Activated B cell treated with CpG ODN at 0.5 μM for 24 hours (primary cell): ENCODE measurements at regions of chr3 and their contacts with region 1.

Region 1: GRCh38 chr3:59049671-59050331 is at the start of gene CFAP20DC:
- DNase-seq: peak; percentile 85
- ATAC-seq: peak; percentile 96
- H3K4me3 Mint-ChIP-seq: peak within 1 kb of the TSS; percentile 81
- H3K27ac Mint-ChIP-seq: peak within 1 kb of the TSS; percentile 61
- H3K4me1 Mint-ChIP-seq: peaks cover 7% of the 10 kb centered on the region
- H3K27me3 Mint-ChIP-seq: no peaks in the 10 kb centered on the region
- CTCF ChIP-seq: no peak
- total RNA-seq, gene CFAP20DC: 1.0 and 1.6 TPM in 2 replicates

Region 2: DNA sequence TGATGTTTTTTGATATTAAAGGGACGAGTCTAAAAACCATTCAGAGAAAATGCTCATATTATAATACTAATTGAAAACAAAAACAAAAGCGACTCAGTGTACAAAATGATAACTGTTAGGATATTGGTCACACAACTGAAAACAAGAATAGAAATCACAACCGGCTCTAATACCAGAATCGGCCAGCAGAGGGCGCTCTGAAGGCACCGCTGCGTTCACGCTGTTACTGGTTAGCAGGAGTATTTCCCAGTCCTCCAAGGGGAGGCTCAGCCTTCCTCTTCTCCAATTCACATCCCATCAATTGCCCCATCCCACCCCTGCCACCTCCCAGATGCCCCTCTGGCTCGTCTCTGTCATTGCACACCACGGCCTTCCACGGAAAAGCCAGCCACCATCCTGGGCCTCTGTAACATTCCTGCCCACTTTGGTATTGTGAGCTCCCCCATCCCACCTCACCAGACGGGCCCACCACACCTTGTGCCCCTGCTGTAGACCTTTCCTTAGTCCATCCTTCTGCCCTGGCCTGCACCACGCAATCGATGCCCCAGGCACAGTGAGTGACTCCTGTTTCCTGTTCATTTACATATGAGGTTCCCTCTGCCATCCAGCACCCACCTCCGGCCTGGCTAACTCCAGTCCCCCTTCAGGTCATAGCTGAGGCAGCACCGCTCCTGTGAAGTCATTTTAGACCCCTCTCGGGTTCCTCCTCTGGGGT is 481.1 kb before region 1 on chr3:
- CTCF ChIA-PET with region 1: no interaction called
- POLR2A ChIA-PET with region 1: no interaction called
- intact Hi-C with region 1: loop called (anchors 1 kb)
- DNase-seq: peak; percentile 61
- ATAC-seq: peak; percentile 49
- H3K4me3 Mint-ChIP-seq: peak overlapping the region; percentile 65
- H3K27ac Mint-ChIP-seq: no peak overlapping the region
- H3K4me1 Mint-ChIP-seq: peaks cover 6% of the 10 kb centered on the region
- H3K27me3 Mint-ChIP-seq: no peaks in the 10 kb centered on the region
- CTCF ChIP-seq: no peak

Region 3: GRCh38 chr3:58640700-58641372 is 409.0 kb before region 1 on chr3:
- CTCF ChIA-PET with region 1: interaction called, 52 read pairs
- POLR2A ChIA-PET with region 1: no interaction called
- intact Hi-C with region 1: loop called (anchors 1 kb)
- DNase-seq: peak; percentile 50
- ATAC-seq: peak; percentile 96
- H3K4me3 Mint-ChIP-seq: no peak overlapping the region
- H3K27ac Mint-ChIP-seq: no peak overlapping the region
- H3K4me1 Mint-ChIP-seq: peaks cover 7% of the 10 kb centered on the region
- H3K27me3 Mint-ChIP-seq: peaks cover 2% of the 10 kb centered on the region
- CTCF ChIP-seq: peak; percentile 37

Region 4: DNA sequence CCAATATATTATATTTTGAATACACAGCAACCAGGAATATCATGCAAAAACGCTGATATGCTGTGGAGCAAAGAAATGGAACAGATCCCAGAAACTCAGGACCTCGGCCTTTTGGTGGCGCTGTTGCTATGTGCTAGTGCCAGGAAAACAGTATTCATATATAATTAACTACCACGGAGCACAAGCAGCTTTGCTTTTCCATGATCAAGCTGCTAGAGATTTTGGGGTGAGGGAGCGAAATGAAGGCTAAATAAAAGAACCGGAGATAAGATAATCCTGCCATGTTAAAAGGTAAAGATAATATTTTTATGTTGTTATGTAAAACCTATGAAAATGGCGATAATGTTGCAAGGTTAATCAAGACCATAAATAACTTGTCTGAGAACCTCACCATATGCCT is 225.5 kb before region 1 on chr3:
- CTCF ChIA-PET with region 1: interaction called, 56 read pairs
- POLR2A ChIA-PET with region 1: no interaction called
- intact Hi-C with region 1: loop called (anchors 1 kb)
- DNase-seq: no peak
- ATAC-seq: no peak
- H3K4me3 Mint-ChIP-seq: no peak overlapping the region
- H3K27ac Mint-ChIP-seq: no peak overlapping the region
- H3K4me1 Mint-ChIP-seq: peaks cover 5% of the 10 kb centered on the region
- H3K27me3 Mint-ChIP-seq: no peaks in the 10 kb centered on the region
- CTCF ChIP-seq: no peak

Region 5: GRCh38 chr3:58994746-58995330 is 55.0 kb before region 1 on chr3:
- CTCF ChIA-PET with region 1: interaction called, 10 read pairs
- POLR2A ChIA-PET with region 1: no interaction called
- intact Hi-C with region 1: loop called (anchors 1 kb)
- DNase-seq: no peak
- ATAC-seq: peak; percentile 54
- H3K4me3 Mint-ChIP-seq: peak overlapping the region; percentile 25
- H3K27ac Mint-ChIP-seq: no peak overlapping the region
- H3K4me1 Mint-ChIP-seq: peaks cover 4% of the 10 kb centered on the region
- H3K27me3 Mint-ChIP-seq: no peaks in the 10 kb centered on the region
- CTCF ChIP-seq: peak; percentile 42